Ovary (tissue), 10 donors: ENCODE measurements at regions of chr9 and their contacts with region 1.

Region 1: DNA sequence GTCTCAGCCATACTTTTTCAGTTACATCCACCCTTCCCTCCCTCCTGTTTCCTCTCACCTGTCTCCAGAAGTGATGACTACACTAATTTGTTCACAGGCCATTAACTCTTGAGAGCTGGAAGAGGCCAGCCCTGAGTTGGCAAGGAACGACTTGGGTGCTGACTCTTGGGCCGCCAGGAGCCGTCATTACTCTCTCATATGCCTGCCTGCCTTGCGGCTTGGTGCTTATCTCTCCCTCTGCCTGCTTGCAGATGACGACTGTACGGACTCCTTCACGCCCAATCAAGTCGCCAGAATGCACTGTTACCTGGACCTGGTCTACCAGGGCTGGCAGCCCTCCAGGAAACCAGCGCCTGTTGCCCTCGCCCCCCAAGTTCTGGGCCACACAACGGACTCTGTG is 66.1 kb downstream of the PAPPA start:
- DNase-seq: peak in 1 of 5 donors; percentile 25
- H3K4me3 ChIP-seq: no peak overlapping the region
- H3K27ac ChIP-seq: no peak overlapping the region
- H3K4me1 ChIP-seq: peaks cover 1% of the 10 kb centered on the region
- H3K27me3 ChIP-seq: no peaks in the 10 kb centered on the region
- CTCF ChIP-seq: no peak
- EP300 ChIP-seq: no peak
- POLR2A ChIP-seq: no peak

Region 2: GRCh38 chr9:116174111-116174746 is 45.5 kb before region 1 on chr9:
- intact Hi-C with region 1: loop called in 1 of 4 experiments (anchors 10 kb)
- DNase-seq: no peak
- H3K4me3 ChIP-seq: no peak overlapping the region
- H3K27ac ChIP-seq: no peak overlapping the region
- H3K4me1 ChIP-seq: no peaks in the 10 kb centered on the region
- H3K27me3 ChIP-seq: no peaks in the 10 kb centered on the region
- CTCF ChIP-seq: no peak
- EP300 ChIP-seq: no peak
- POLR2A ChIP-seq: no peak